Activated CD4-positive, alpha-beta T cell treated with anti-CD3 and anti-CD28 coated beads, Interleukin-2, amount 10 ng/mL, durations not matched to agents 24 days and 14 days (primary cell): ENCODE measurements at regions of chr1 and their contacts with region 1.

Region 1: GRCh38 chr1:174206148-174206836 is 47.0 kb downstream of the RABGAP1L start:
- DNase-seq: no peak
- H3K4me3 Mint-ChIP-seq: no peak overlapping the region
- H3K27ac Mint-ChIP-seq: no peak overlapping the region
- H3K4me1 Mint-ChIP-seq: peaks cover 32% of the 10 kb centered on the region
- H3K27me3 Mint-ChIP-seq: no peaks in the 10 kb centered on the region

Region 2: DNA sequence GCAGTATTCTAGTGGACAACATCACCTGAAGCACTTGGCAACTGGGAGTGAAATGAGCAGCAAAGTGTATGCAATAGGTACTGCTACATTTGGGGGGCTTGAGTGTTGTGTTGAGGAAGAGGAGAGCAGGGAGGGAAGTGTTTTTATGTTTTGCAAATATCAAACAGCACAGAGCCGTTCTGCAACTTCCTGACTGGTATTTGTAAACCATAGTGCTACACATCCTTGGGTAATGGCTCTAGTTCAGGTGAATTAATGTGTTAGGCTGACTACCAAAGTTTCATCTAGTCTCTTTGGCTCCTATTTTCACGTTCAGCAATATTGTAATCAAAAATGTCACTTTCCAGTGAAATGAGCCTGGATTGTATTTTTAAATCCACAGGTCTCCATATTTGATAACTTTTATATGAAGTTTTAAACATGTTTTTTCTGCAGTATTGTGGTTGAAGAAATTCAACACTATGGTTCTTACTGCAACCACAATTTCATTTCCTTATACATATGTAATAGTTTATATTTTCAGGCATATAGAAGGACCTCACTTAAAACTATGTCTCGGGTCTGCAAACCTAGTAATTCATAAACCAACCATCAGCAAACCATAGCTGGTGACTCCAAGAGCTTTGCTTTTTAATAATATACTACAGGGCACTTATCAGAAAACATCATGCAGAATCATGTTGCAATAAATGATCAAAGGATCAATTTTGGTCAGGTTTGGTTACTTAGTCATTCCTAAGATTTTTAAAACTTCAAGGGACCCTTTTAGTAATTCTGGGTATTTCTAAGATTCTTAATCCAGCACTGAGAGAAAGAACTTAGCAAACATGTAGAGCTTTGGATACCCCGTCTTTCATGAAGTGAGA is 319.3 kb before region 1 on chr1:
- intact Hi-C with region 1: no loop called
- DNase-seq: no peak
- H3K4me3 Mint-ChIP-seq: no peak overlapping the region
- H3K27ac Mint-ChIP-seq: peak overlapping the region; percentile 16
- H3K4me1 Mint-ChIP-seq: peaks cover 11% of the 10 kb centered on the region
- H3K27me3 Mint-ChIP-seq: no peaks in the 10 kb centered on the region

Region 3: GRCh38 chr1:174142836-174143235 is 63.5 kb before region 1 on chr1:
- intact Hi-C with region 1: no loop called
- DNase-seq: no peak
- H3K4me3 Mint-ChIP-seq: no peak overlapping the region
- H3K27ac Mint-ChIP-seq: no peak overlapping the region
- H3K4me1 Mint-ChIP-seq: no peaks in the 10 kb centered on the region
- H3K27me3 Mint-ChIP-seq: peaks cover 14% of the 10 kb centered on the region

Region 4: DNA sequence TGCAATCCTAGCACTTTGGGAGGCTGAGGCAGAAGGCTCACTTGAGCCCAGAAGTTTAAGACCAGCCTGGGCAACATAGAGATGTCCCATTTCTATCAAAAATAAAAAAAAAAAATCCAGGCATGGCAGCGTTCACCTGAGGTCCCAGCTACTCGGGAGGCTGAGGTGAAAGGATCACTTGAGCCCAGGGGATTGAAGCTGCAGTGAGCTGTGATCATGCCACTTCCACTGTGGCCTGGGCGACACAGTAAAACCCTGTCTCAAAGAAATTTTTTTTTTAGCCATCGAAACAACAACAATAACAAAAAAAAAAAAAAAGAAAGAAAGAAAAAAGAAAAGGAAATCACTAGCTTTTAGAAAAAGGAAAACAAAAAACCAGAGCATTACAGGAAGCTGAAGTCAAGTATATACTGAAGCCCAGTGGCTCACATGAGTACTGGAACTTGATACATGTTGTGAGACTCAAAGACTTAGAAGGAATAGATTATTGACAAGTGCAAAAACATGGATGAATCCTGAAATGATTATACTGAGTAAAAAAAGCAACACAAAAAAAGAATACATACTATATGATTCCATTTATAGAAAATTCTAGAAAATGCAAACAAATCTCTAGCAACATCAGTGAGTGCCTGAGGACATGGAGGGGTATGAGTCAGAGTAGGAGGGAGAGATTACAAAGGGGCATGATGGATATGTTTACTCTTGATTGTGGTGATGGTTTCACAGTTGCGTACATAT is 53.0 kb before region 1 on chr1:
- intact Hi-C with region 1: loop called (anchors 1 kb)
- DNase-seq: peak; percentile 61
- H3K4me3 Mint-ChIP-seq: no peak overlapping the region
- H3K27ac Mint-ChIP-seq: peak overlapping the region; percentile 63
- H3K4me1 Mint-ChIP-seq: peaks cover 38% of the 10 kb centered on the region
- H3K27me3 Mint-ChIP-seq: no peaks in the 10 kb centered on the region

Region 5: GRCh38 chr1:174174461-174175329 is 31.6 kb before region 1 on chr1:
- intact Hi-C with region 1: no loop called
- DNase-seq: no peak
- H3K4me3 Mint-ChIP-seq: no peak overlapping the region
- H3K27ac Mint-ChIP-seq: peak overlapping the region; percentile 59
- H3K4me1 Mint-ChIP-seq: peaks cover 6% of the 10 kb centered on the region
- H3K27me3 Mint-ChIP-seq: no peaks in the 10 kb centered on the region

Region 6: DNA sequence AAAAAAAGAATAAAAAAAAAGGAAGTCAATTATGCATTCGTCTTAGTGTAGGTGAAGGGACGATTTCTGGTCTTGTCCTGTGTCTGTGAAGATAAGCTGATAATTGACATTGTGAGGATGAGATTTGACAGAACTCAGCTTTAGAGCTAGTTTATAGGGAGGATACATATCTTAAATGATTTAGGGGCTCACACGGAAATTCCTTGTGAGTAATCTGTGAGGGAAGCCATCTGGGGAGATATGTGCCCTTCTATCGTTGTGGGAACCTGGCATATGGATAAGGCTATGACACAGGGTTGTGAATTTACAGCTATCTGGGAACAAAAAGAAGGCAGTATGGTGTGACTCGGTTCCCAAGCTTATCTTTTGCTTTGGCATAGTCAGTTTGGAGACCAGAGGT is 24.1 kb after region 1 on chr1:
- intact Hi-C with region 1: no loop called
- DNase-seq: no peak
- H3K4me3 Mint-ChIP-seq: no peak overlapping the region
- H3K27ac Mint-ChIP-seq: no peak overlapping the region
- H3K4me1 Mint-ChIP-seq: peaks cover 6% of the 10 kb centered on the region
- H3K27me3 Mint-ChIP-seq: no peaks in the 10 kb centered on the region